AG04450 (cell line): ENCODE measurements at regions of chr5 and their contacts with region 1.

Region 1: DNA sequence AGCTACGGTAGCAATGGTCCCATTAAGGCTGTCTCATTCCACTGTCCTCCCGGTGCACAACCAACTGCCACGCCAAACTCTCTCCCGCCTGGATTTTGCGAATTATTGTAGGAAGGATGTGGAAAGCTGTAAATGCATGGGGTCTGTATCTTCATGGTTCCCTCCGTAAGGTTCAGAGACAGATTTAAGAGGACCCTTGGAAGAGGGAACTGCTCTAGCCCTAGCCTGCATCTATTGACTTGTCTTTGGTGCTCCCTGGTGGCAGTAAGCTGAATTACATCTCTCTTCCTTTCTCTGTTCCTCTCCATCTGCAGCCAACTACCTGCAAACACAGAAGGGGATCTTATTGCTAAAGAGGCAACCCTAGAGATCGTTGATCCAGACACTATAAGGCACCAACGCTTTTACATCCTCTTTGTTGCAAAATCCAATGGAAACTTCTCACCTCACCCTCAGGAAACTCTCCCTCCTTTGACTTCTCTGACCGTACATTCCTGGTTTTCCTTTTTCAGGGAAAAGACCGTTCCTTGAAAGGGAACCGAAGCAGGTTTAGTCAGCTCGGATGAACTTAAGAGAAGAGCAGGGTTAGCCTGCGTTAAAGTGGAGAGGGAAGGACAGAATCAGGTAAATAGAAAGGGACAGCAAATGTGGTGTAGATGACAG is 11.9 kb downstream of the CAPSL start:
- DNase-seq: no peak
- H3K4me3 ChIP-seq: no peak overlapping the region
- H3K27ac ChIP-seq: peak overlapping the region; percentile 1
- H3K27me3 ChIP-seq: no peaks in the 10 kb centered on the region
- CTCF ChIP-seq: peak; percentile 88

Region 2: DNA sequence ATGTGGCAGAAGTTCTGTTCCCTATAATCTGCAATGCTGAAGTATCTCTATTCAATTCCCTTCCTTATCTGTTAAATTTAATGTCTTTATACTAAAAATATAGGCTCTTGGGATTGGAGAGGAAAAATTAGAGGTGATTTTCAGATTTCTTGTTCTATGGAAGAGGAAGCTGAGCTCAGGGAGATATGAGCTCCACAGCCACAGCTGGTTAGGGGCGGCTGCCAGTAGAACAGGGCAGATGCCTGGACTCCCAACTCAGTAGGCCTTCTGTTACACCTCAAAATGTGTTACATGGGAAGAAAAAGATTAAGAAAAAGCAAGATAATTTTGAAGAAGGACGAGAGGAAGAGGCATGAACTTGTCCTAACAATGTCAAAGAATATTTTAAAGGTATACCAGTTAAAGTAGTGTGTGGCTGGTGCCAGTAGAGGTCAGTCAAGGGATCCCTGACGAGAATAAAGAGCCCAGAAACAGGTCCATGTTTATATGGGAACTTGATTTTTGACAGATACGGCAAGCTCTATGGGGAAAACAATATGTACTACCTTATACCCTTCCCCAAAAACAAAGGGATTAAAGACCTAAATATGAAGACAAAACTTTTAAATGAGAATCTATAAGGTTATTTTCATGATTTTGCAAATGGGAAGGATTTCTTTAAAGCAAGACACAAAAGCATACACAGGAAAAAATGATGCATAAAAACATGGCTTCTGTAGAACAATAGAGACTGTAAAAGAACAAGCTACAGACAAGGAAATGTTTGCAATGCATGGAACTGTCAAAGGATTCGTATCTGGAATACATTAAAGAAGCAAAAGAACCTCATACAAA is 968.4 kb before region 1 on chr5:
- CTCF ChIA-PET with region 1: interaction called, 10 read pairs
- POLR2A ChIA-PET with region 1: no interaction called
- DNase-seq: no peak
- H3K4me3 ChIP-seq: no peak overlapping the region
- H3K27ac ChIP-seq: no peak overlapping the region
- H3K27me3 ChIP-seq: no peaks in the 10 kb centered on the region
- CTCF ChIP-seq: peak; percentile 73

Region 3: GRCh38 chr5:35575578-35575977 is 350.9 kb before region 1 on chr5:
- CTCF ChIA-PET with region 1: interaction called, 10 read pairs
- POLR2A ChIA-PET with region 1: no interaction called
- DNase-seq: no peak
- H3K4me3 ChIP-seq: no peak overlapping the region
- H3K27ac ChIP-seq: no peak overlapping the region
- H3K27me3 ChIP-seq: no peaks in the 10 kb centered on the region
- CTCF ChIP-seq: no peak

Region 4: DNA sequence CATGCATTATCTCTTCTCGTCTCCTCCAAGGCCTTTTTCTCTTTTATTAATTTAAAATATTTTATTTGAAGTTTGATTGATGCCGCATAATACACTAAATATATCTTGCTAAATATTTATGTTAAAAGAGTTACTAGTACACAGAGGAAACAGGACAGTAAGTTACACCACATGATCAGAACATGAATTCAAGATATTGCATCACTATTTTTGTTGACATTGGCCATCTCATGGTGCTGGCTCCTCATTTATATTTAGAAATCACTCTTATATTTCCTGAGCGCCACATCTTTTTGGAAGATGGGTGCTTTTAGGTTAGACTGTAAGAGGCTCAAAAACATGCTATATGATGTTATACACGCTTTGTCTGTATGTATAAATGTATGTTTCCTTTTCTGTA is 285.9 kb before region 1 on chr5:
- CTCF ChIA-PET with region 1: interaction called, 17 read pairs
- POLR2A ChIA-PET with region 1: no interaction called
- DNase-seq: no peak
- H3K4me3 ChIP-seq: no peak overlapping the region
- H3K27ac ChIP-seq: no peak overlapping the region
- H3K27me3 ChIP-seq: no peaks in the 10 kb centered on the region
- CTCF ChIP-seq: no peak

Region 5: GRCh38 chr5:35665096-35665495 is 261.4 kb before region 1 on chr5:
- CTCF ChIA-PET with region 1: interaction called, 14 read pairs
- POLR2A ChIA-PET with region 1: no interaction called
- DNase-seq: no peak
- H3K4me3 ChIP-seq: no peak overlapping the region
- H3K27ac ChIP-seq: no peak overlapping the region
- H3K27me3 ChIP-seq: no peaks in the 10 kb centered on the region
- CTCF ChIP-seq: no peak

Region 6: DNA sequence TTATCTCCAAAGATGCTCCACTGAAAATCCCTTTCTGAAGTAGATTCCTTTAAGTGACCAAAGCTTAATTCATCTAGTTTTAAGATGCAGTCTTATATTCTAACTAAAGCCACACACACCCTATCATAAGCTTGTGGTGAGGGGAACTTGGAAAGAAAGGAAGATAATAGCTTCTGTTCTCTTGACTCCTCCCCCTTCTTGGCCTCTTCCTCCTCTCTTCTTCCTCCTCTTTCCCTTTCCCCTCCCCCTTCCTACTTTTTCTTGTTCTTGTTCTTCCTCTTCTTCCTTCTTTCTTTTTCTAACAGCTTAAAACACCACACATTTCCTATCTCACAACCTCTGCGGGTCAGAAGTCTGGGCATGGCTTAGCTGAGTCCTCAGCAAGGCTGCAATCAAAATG is 46.4 kb before region 1 on chr5:
- CTCF ChIA-PET with region 1: interaction called, 10 read pairs
- POLR2A ChIA-PET with region 1: no interaction called
- DNase-seq: no peak
- H3K4me3 ChIP-seq: no peak overlapping the region
- H3K27ac ChIP-seq: no peak overlapping the region
- H3K27me3 ChIP-seq: no peaks in the 10 kb centered on the region
- CTCF ChIP-seq: no peak